ENCODE measurements at regions of chr2 and their contacts with region 1.

Region 1: GRCh38 chr2:168365094-168365621 is 90.9 kb upstream of the CERS6 start:
- DNase-seq: no peak
- ATAC-seq: no peak
- H3K4me3 ChIP-seq: no peak overlapping the region
- H3K27ac ChIP-seq: no peak overlapping the region
- H3K4me1 ChIP-seq: no peaks in the 10 kb centered on the region
- H3K27me3 ChIP-seq: no peaks in the 10 kb centered on the region
- CTCF ChIP-seq: no peak
- EP300 ChIP-seq: no peak
- POLR2A ChIP-seq: no peak
- RAD21 ChIP-seq: no peak

Region 2: DNA sequence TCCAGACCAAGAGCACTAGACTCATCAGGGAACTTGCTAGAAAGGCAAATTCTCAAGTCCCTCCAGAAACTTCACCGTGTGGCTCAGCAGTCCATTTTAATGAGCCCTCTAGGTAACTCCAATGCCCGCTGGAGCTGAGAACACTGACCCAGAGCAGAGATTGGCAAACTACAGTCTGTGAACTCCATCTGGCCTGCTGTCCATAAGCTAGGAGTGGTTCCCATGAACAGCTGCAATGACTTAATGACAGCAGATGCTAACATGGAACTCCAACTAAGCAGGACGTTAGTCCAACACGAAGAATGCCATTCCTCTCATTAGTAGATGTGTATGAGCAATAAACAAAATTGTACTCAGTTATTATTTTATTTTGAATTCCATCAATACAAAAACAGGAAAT is 489.6 kb before region 1 on chr2:
- CTCF ChIA-PET with region 1: no interaction called
- POLR2A ChIA-PET with region 1: no interaction called
- RAD21 ChIA-PET with region 1: no interaction called
- SMC1A ChIA-PET with region 1: no interaction called
- in situ Hi-C with region 1: no loop called
- intact Hi-C with region 1: no loop called
- DNase-seq: no peak
- ATAC-seq: no peak
- H3K4me3 ChIP-seq: no peak overlapping the region
- H3K27ac ChIP-seq: no peak overlapping the region
- H3K4me1 ChIP-seq: no peaks in the 10 kb centered on the region
- H3K27me3 ChIP-seq: no peaks in the 10 kb centered on the region
- CTCF ChIP-seq: no peak
- EP300 ChIP-seq: no peak
- POLR2A ChIP-seq: no peak
- RAD21 ChIP-seq: no peak

Region 3: DNA sequence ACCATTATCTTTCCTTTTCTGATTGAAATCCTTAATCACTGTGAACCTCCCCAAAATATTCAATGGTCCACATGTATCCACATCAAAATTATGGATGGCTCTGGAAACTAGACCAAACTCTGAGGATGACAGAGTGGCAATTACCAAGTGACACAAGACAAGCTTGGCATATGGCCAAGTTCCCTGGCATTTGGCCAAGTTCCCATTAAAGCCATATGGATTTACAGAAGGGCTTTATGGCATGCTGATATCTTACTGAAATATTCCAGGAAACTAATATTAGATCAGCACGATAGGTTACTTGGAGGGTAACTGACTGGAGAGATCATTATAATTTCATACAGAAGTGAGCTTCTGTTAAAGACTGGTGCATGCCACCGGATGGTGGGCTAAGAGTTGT is 69.0 kb after region 1 on chr2:
- CTCF ChIA-PET with region 1: no interaction called
- POLR2A ChIA-PET with region 1: no interaction called
- RAD21 ChIA-PET with region 1: no interaction called
- SMC1A ChIA-PET with region 1: no interaction called
- in situ Hi-C with region 1: no loop called
- intact Hi-C with region 1: loop called (anchors 5 kb)
- DNase-seq: no peak
- ATAC-seq: no peak
- H3K4me3 ChIP-seq: no peak overlapping the region
- H3K27ac ChIP-seq: no peak overlapping the region
- H3K4me1 ChIP-seq: peaks cover 13% of the 10 kb centered on the region; the same call in 1 of the 2 replicates
- H3K27me3 ChIP-seq: no peaks in the 10 kb centered on the region
- CTCF ChIP-seq: no peak
- EP300 ChIP-seq: no peak
- POLR2A ChIP-seq: no peak
- RAD21 ChIP-seq: no peak